GM18951 (cell line): ENCODE measurements at regions of chr2 and their contacts with region 1.

Region 1: DNA sequence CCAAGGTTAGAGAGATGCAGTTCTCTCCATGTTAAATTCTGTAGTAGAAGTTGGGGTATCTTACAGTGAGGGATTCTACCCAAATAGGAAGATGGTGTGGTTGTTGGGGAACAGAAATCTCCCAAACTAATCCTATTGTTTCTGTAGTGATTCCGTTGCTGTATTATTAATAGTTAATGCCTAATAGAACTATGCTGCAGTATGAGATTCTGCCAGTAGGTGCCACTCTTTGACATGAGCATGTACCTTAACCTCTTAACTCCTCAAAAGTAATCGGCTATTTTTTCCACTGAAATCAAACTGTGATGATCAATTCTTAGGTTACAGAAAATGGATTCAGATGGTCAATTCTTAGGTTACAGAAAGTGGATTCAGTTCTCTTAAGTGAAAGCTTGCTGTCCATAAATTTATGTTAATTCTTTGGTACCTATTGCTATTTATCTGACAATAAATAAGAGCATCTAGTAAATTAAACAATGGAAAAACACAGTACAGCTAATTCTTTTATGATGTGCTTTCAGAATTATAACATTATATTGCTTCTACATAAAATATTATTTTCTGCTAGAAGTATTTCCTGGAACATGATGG is 97.9 kb upstream of the DLX2 start:
- POLR2A ChIP-seq: no peak

Region 2: DNA sequence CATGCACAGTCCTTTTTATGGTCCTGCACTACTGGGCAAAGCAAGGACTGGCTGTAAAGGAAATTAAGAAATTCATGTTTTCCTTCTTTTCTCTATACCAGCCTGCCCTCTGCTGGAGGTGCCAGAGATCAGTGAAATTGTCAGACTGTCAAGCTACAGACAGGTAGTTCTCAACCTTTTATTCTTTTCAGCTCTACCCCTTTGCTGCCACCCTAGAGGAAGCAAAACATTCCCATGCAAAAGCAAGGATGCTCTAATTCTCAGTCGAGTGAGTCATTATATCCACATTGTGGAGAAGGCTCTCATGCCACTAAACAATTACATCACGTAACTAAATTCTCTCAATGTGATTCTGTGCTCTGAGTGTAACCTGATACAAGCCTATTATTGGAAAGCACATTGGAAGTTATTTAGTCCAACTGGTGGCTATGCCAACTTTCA is 510.0 kb after region 1 on chr2:
- in situ Hi-C with region 1: loop called (anchors 25 kb)
- POLR2A ChIP-seq: no peak